Endothelial cell of umbilical vein (primary cell): ENCODE measurements at regions of chr5 and their contacts with region 1.

Region 1: GRCh38 chr5:93359296-93359958 is 221.6 kb downstream of the NR2F1-AS1 start:
- DNase-seq: peak; percentile 98
- H3K4me3 ChIP-seq: peak overlapping the region in 2 of 3 experiments; percentile 10 to 40
- H3K27ac ChIP-seq: peak overlapping the region; percentile 91
- H3K4me1 ChIP-seq: peaks cover 49% of the 10 kb centered on the region
- H3K27me3 ChIP-seq: no peaks in the 10 kb centered on the region
- CTCF ChIP-seq: no peak
- POLR2A ChIP-seq: peak; percentile 91

Region 2: DNA sequence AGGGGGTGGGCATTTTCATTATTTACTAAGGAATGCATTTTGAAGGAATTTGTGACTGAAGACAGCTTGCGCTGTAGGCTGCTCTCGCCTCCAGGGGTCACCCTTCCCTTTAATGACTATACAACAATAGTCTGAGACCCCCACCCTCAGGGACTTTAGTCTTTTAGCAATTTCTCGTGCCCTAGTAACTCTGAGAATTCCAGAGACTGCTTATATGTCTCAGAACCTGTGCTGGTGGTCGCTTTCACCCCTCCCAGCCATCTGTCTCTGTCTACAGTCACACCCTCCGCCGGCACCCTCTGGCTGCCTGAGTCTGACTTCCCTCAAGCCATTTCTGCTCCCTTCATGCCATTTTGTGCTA is 449.8 kb before region 1 on chr5:
- CTCF ChIA-PET with region 1: interaction called, 14 read pairs
- POLR2A ChIA-PET with region 1: no interaction called
- dilution Hi-C with region 1: no loop called
- intact Hi-C with region 1: loop called (anchors 1 kb)
- DNase-seq: peak; percentile 53
- H3K4me3 ChIP-seq: no peak overlapping the region
- H3K27ac ChIP-seq: no peak overlapping the region
- H3K4me1 ChIP-seq: peaks cover 16% of the 10 kb centered on the region
- H3K27me3 ChIP-seq: no peaks in the 10 kb centered on the region
- CTCF ChIP-seq: peak; percentile 68 to 74
- POLR2A ChIP-seq: no peak

Region 3: GRCh38 chr5:93151121-93151520 is 208.3 kb before region 1 on chr5:
- CTCF ChIA-PET with region 1: interaction called, 4 read pairs
- POLR2A ChIA-PET with region 1: no interaction called
- dilution Hi-C with region 1: no loop called
- intact Hi-C with region 1: loop called (anchors 1 kb)
- DNase-seq: peak; percentile 83
- H3K4me3 ChIP-seq: no peak overlapping the region
- H3K27ac ChIP-seq: peak overlapping the region; percentile 66
- H3K4me1 ChIP-seq: peaks cover 17% of the 10 kb centered on the region
- H3K27me3 ChIP-seq: no peaks in the 10 kb centered on the region
- CTCF ChIP-seq: no peak
- POLR2A ChIP-seq: no peak

Region 4: GRCh38 chr5:93249651-93250289 is 109.7 kb before region 1 on chr5:
- CTCF ChIA-PET with region 1: interaction called, 7 read pairs
- POLR2A ChIA-PET with region 1: no interaction called
- dilution Hi-C with region 1: no loop called
- intact Hi-C with region 1: loop called (anchors 1 kb)
- DNase-seq: peak; percentile 87
- H3K4me3 ChIP-seq: peak overlapping the region in 2 of 3 experiments; percentile 14 to 58
- H3K27ac ChIP-seq: peak overlapping the region; percentile 88
- H3K4me1 ChIP-seq: peaks cover 26% of the 10 kb centered on the region
- H3K27me3 ChIP-seq: no peaks in the 10 kb centered on the region
- CTCF ChIP-seq: no peak
- POLR2A ChIP-seq: peak; percentile 57

Region 5: GRCh38 chr5:93342563-93343061 is 16.8 kb before region 1 on chr5:
- CTCF ChIA-PET with region 1: no interaction called
- POLR2A ChIA-PET with region 1: no interaction called
- dilution Hi-C with region 1: no loop called
- intact Hi-C with region 1: no loop called
- DNase-seq: no peak
- H3K4me3 ChIP-seq: no peak overlapping the region
- H3K27ac ChIP-seq: no peak overlapping the region
- H3K4me1 ChIP-seq: no peaks in the 10 kb centered on the region
- H3K27me3 ChIP-seq: no peaks in the 10 kb centered on the region
- CTCF ChIP-seq: no peak
- POLR2A ChIP-seq: no peak

Region 6: GRCh38 chr5:93378073-93378472 is 18.6 kb after region 1 on chr5:
- CTCF ChIA-PET with region 1: no interaction called
- POLR2A ChIA-PET with region 1: no interaction called
- dilution Hi-C with region 1: no loop called
- intact Hi-C with region 1: no loop called
- DNase-seq: no peak
- H3K4me3 ChIP-seq: no peak overlapping the region
- H3K27ac ChIP-seq: no peak overlapping the region
- H3K4me1 ChIP-seq: no peaks in the 10 kb centered on the region
- H3K27me3 ChIP-seq: no peaks in the 10 kb centered on the region
- CTCF ChIP-seq: no peak
- POLR2A ChIP-seq: no peak

Region 7: DNA sequence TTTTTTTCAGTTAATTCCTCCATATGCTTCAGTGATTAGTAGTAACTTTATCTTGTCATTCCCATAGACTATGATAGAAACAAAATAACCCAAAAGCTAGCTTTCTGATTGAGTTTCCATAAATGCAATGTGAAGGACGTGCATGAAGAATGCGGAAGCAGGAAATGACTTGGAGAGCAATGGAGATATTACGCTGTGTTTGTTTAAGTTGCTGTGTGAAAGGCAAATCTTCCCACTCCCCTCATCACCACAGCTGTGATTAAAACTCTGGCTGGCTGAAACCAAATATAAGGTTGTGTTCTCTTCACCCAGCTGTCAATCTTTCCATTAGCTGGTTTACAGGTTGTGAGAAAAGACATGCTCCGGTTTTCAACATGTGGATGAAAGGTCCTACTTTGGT is 137.7 kb after region 1 on chr5:
- CTCF ChIA-PET with region 1: interaction called, 3 read pairs
- POLR2A ChIA-PET with region 1: no interaction called
- dilution Hi-C with region 1: no loop called
- intact Hi-C with region 1: loop called (anchors 1 kb)
- DNase-seq: peak; percentile 86
- H3K4me3 ChIP-seq: no peak overlapping the region
- H3K27ac ChIP-seq: peak overlapping the region; percentile 70
- H3K4me1 ChIP-seq: peaks cover 11% of the 10 kb centered on the region
- H3K27me3 ChIP-seq: no peaks in the 10 kb centered on the region
- CTCF ChIP-seq: no peak
- POLR2A ChIP-seq: no peak

Region 8: GRCh38 chr5:93532370-93532769 is 172.9 kb after region 1 on chr5:
- CTCF ChIA-PET with region 1: no interaction called
- POLR2A ChIA-PET with region 1: no interaction called
- dilution Hi-C with region 1: no loop called
- intact Hi-C with region 1: no loop called
- DNase-seq: peak; percentile 63
- H3K4me3 ChIP-seq: no peak overlapping the region
- H3K27ac ChIP-seq: no peak overlapping the region
- H3K4me1 ChIP-seq: no peaks in the 10 kb centered on the region
- H3K27me3 ChIP-seq: no peaks in the 10 kb centered on the region
- CTCF ChIP-seq: no peak
- POLR2A ChIP-seq: no peak

Region 9: GRCh38 chr5:93915142-93915553 is 555.7 kb after region 1 on chr5:
- CTCF ChIA-PET with region 1: no interaction called
- POLR2A ChIA-PET with region 1: no interaction called
- dilution Hi-C with region 1: no loop called
- intact Hi-C with region 1: loop called (anchors 10 kb)
- DNase-seq: peak; percentile 50
- H3K4me3 ChIP-seq: no peak overlapping the region
- H3K27ac ChIP-seq: no peak overlapping the region
- H3K4me1 ChIP-seq: no peaks in the 10 kb centered on the region
- H3K27me3 ChIP-seq: no peaks in the 10 kb centered on the region
- CTCF ChIP-seq: peak; percentile 24
- POLR2A ChIP-seq: no peak